ENCODE measurements at regions of chr1 and their contacts with region 1.

Region 1: GRCh38 chr1:178060789-178061556 is 32.9 kb upstream of the RASAL2 start:
- DNase-seq: peak; percentile 70
- H3K4me3 ChIP-seq: no peak overlapping the region
- H3K27ac ChIP-seq: peak overlapping the region; percentile 17
- H3K4me1 ChIP-seq: peaks cover 27% of the 10 kb centered on the region
- H3K27me3 ChIP-seq: no peaks in the 10 kb centered on the region
- CTCF ChIP-seq: peak in 1 of 2 donors; percentile 9

Region 2: DNA sequence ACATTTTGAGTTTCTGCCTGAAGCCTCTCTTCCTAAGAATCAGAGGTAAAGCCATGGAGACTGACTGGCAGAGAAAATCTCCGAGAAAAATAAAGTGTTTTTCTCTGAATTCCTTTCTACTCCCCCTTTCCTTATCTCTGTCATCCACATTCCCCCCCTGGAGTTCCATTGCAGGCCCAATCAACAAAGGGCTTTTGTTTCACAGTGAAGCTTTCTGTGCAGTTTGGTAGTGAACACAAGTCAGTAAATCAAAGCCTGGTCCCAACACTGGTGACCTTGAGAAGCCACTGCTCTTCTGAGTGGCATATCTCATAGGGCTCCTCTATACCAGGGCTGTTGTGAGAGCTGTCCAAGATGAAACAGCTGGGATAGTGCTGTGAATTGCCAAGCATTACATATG is 319.5 kb before region 1 on chr1:
- CTCF ChIA-PET with region 1: no interaction called
- dilution Hi-C with region 1: no loop called
- in situ Hi-C with region 1: no loop called
- intact Hi-C with region 1: no loop called
- DNase-seq: no peak
- H3K4me3 ChIP-seq: no peak overlapping the region
- H3K27ac ChIP-seq: no peak overlapping the region
- H3K4me1 ChIP-seq: no peaks in the 10 kb centered on the region
- H3K27me3 ChIP-seq: no peaks in the 10 kb centered on the region
- CTCF ChIP-seq: no peak

Region 3: DNA sequence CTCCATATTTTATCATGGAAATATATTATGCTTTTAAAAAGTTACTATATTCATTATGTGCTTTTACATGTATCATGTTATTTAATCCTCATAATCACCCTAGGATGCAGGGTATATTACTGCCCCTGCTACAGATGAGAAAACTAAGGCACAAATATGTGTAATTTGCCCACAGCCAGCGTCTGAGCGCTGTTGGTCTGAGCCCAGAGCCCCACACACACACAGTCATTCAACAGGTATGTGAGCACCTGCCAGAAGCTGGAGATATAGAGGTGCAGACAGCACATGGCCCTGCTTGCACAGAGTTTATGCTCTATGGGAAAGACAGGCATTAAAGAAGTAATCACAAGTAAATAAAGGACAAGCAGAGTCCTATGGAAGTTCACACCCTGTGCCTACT is 41.4 kb before region 1 on chr1:
- CTCF ChIA-PET with region 1: no interaction called
- dilution Hi-C with region 1: loop called (anchors 5 kb)
- in situ Hi-C with region 1: no loop called
- intact Hi-C with region 1: no loop called
- DNase-seq: peak; percentile 28
- H3K4me3 ChIP-seq: no peak overlapping the region
- H3K27ac ChIP-seq: no peak overlapping the region
- H3K4me1 ChIP-seq: no peaks in the 10 kb centered on the region
- H3K27me3 ChIP-seq: no peaks in the 10 kb centered on the region
- CTCF ChIP-seq: no peak